ENCODE measurements at regions of chr1 and their contacts with region 1.

Region 1: GRCh38 chr1:163321311-163322305 is at the start of gene NUF2:
- DNase-seq: peak; percentile 98
- H3K4me3 Mint-ChIP-seq: peak within 1 kb of the TSS; percentile 89
- H3K27ac Mint-ChIP-seq: peak within 1 kb of the TSS; percentile 97
- H3K4me1 Mint-ChIP-seq: peaks cover 12% of the 10 kb centered on the region
- H3K27me3 Mint-ChIP-seq: no peaks in the 10 kb centered on the region
- total RNA-seq, gene NUF2: 63.0 to 69.0 TPM

Region 2: DNA sequence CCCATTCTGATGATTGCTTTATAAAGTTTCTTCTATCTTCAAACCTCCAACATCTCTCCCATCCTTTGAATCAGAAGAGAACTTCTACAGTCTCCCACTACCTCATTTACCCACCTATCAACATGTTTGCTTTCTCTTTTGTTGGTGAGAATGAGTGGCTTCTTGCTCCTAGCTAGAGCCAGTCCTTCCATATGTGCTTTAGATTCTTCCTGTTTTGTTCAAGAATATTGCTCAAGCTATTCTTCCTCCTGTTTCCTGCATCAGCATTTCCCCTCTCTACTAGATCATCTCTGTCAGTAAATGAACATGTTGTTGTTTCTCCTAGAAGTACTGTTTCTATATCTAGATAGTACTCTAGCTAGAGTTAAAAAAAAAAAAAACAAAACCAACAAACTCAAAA is 1549.2 kb before region 1 on chr1:
- CTCF ChIA-PET with region 1: no interaction called
- intact Hi-C with region 1: loop called (anchors 10 kb)
- DNase-seq: no peak
- H3K4me3 Mint-ChIP-seq: no peak overlapping the region
- H3K27ac Mint-ChIP-seq: no peak overlapping the region
- H3K4me1 Mint-ChIP-seq: peaks cover 29% of the 10 kb centered on the region
- H3K27me3 Mint-ChIP-seq: no peaks in the 10 kb centered on the region

Region 3: GRCh38 chr1:162497723-162498500 is 823.7 kb before region 1 on chr1 and contains the start of gene UHMK1:
- CTCF ChIA-PET with region 1: no interaction called
- intact Hi-C with region 1: loop called (anchors 1 kb)
- DNase-seq: peak; percentile 96
- H3K4me3 Mint-ChIP-seq: peak within 1 kb of the TSS; percentile 84
- H3K27ac Mint-ChIP-seq: peak within 1 kb of the TSS; percentile 89
- H3K4me1 Mint-ChIP-seq: peaks cover 38% of the 10 kb centered on the region
- H3K27me3 Mint-ChIP-seq: no peaks in the 10 kb centered on the region
- total RNA-seq, gene UHMK1: 43.4 to 43.7 TPM

Region 4: GRCh38 chr1:162561037-162561616 is 760.5 kb before region 1 on chr1:
- CTCF ChIA-PET with region 1: no interaction called
- intact Hi-C with region 1: loop called (anchors 1 kb)
- DNase-seq: peak; percentile 98
- H3K4me3 Mint-ChIP-seq: peak overlapping the region; percentile 92
- H3K27ac Mint-ChIP-seq: peak overlapping the region; percentile 91
- H3K4me1 Mint-ChIP-seq: peaks cover 35% of the 10 kb centered on the region
- H3K27me3 Mint-ChIP-seq: no peaks in the 10 kb centered on the region

Region 5: GRCh38 chr1:163290025-163290640 is 31.5 kb before region 1 on chr1:
- CTCF ChIA-PET with region 1: no interaction called
- intact Hi-C with region 1: loop called (anchors 2 kb)
- DNase-seq: no peak
- H3K4me3 Mint-ChIP-seq: no peak overlapping the region
- H3K27ac Mint-ChIP-seq: no peak overlapping the region
- H3K4me1 Mint-ChIP-seq: peaks cover 10% of the 10 kb centered on the region
- H3K27me3 Mint-ChIP-seq: no peaks in the 10 kb centered on the region

Region 6: DNA sequence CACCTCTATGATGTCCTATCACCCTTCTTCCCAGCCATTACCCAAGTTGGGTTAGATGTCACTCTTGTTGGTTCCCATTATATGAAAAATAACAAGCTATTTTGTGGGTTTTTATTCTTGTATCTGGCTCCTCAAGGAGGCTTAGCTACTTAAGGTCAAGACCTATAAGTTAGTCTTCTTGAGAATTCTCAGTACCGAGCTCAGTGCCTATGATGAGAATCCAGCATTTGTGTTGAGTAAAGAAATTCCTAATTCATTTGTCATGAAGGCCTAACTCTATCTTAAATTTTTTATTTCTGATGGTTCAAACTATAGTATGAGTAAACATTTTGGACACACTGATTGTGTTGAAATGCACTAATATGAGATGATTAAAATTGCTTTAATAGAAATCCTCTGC is 16.0 kb after region 1 on chr1:
- CTCF ChIA-PET with region 1: no interaction called
- intact Hi-C with region 1: loop called (anchors 2 kb)
- DNase-seq: no peak
- H3K4me3 Mint-ChIP-seq: no peak overlapping the region
- H3K27ac Mint-ChIP-seq: no peak overlapping the region
- H3K4me1 Mint-ChIP-seq: no peaks in the 10 kb centered on the region
- H3K27me3 Mint-ChIP-seq: no peaks in the 10 kb centered on the region